ENCODE measurements at regions of chr10 and their contacts with region 1.

Region 1: DNA sequence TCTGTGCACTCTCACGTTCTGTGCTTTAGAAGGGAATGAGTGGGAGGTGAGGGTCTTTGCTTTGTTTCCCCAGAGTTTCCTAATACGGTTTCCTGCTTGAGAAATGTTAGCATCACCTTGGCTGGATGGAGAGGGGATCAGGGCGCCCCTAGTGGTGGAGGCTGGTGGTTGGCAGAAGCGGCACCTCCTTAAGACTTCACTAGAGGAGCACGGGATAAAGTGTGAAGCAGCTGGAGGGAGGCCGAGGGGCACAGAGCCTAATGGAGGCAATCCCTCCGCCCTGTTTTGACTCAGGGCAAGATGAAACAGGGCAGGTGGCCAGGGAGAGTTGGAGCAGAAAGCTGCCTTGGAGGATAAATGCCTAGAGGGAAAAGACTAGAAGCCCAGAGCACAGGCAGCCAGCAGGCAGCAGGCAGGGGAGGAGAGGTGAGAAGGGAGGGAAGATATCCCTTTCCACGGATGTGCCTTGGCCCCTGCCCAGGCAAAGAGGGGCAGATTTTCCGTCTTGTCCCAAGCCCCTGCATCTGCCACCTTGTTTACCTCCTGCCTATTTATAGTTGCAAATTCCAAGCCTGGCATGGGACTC is 56.0 kb upstream of the BTRC start:
- DNase-seq: peak; percentile 63 to 73 (median 68)
- H3K4me3 ChIP-seq: no peak overlapping the region
- H3K27ac ChIP-seq: no peak overlapping the region
- H3K4me1 ChIP-seq: no peaks in the 10 kb centered on the region
- H3K27me3 ChIP-seq: peaks cover 8 to 78% (median 24%) of the 10 kb centered on the region in 5 experiments

Region 2: GRCh38 chr10:101176577-101176976 is 121.4 kb before region 1 on chr10:
- CTCF ChIA-PET with region 1: no interaction called
- POLR2A ChIA-PET with region 1: no interaction called
- DNase-seq: no peak
- H3K4me3 ChIP-seq: no peak overlapping the region
- H3K27ac ChIP-seq: no peak overlapping the region
- H3K4me1 ChIP-seq: no peaks in the 10 kb centered on the region
- H3K27me3 ChIP-seq: peaks cover 2 to 27% (median 6%) of the 10 kb centered on the region in 5 experiments

Region 3: GRCh38 chr10:101257084-101257483 is 40.9 kb before region 1 on chr10:
- CTCF ChIA-PET with region 1: no interaction called
- POLR2A ChIA-PET with region 1: no interaction called
- DNase-seq: no peak
- H3K4me3 ChIP-seq: no peak overlapping the region
- H3K27ac ChIP-seq: no peak overlapping the region
- H3K4me1 ChIP-seq: no peaks in the 10 kb centered on the region
- H3K27me3 ChIP-seq: peaks cover 9 to 52% (median 21%) of the 10 kb centered on the region in 5 experiments

Region 4: DNA sequence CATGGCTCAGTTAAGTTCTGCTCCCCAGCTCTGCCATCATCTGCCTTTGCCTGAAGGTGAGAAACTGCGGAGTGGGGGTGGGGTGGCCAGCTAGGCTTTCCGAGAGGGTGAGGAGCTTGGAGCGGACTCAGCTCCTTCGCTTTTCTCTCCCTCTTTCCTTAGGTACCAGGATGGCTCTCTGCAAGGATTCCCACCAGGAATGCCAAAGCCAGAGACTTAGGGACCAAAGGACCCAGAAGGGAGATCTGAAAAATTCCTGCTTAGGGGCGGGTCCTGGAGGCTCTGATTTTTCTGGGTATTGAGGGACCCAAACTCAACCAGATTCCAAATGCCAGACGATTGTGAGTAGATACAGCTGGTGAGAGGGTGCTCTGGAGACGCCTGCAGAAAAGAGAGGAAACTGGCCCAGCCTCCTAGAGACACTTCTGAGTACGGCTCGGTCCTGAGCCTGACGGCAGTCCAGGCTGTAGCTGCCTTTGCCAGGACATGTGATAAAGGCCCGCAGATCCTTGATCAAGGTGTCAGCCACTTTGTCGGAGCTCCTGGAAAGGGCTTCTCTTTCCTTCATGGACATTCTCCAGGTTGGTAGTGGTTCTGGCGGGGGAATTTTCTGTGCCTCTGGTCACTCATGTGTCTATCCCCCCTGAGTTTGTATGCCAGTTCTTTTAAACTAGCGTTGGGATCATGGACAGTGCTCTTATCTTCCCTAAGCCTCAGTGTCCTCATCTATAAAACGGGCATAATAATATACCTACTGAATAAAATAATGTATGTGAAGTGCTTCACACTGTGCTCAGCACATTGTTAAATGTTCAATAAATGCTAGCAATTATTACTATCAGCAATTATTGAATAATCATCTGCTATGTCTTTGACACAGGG is 13.4 kb after region 1 on chr10:
- CTCF ChIA-PET with region 1: interaction called, 23 read pairs
- POLR2A ChIA-PET with region 1: no interaction called
- DNase-seq: no peak
- H3K4me3 ChIP-seq: peak overlapping the region in 1 of 7 experiments; percentile 12
- H3K27ac ChIP-seq: no peak overlapping the region
- H3K4me1 ChIP-seq: peaks cover 0 to 8% (median 2%) of the 10 kb centered on the region in 4 experiments
- H3K27me3 ChIP-seq: peaks cover 10 to 72% (median 20%) of the 10 kb centered on the region in 5 experiments

Region 5: GRCh38 chr10:101441541-101442455 is 143.8 kb after region 1 on chr10:
- CTCF ChIA-PET with region 1: interaction called, 55 read pairs
- POLR2A ChIA-PET with region 1: interaction called, 5 read pairs
- DNase-seq: peak; percentile 71 to 85 (median 81)
- H3K4me3 ChIP-seq: no peak overlapping the region
- H3K27ac ChIP-seq: no peak overlapping the region
- H3K4me1 ChIP-seq: no peaks in the 10 kb centered on the region
- H3K27me3 ChIP-seq: peaks cover 0 to 7% (median 0%) of the 10 kb centered on the region in 5 experiments

Region 6: DNA sequence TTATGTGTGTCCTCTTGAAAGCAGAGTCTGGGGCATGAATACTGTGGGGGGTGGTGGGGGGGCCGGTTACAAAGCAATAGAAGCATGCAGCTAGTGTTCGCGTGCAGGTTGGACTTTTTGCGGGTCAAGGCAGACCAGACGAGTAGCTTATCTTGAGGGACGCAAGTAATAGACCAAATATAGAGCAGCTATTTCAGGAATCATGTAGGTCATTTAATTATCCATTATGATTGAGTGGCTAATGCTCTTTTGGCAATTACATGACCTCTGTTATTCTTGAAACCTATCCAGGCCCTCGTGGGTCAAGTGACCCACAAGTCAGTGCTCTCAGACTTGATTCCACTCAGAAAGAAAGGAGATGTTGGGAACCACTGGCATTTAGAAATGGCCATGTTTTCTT is 149.0 kb after region 1 on chr10:
- CTCF ChIA-PET with region 1: interaction called, 55 read pairs
- POLR2A ChIA-PET with region 1: interaction called, 5 read pairs
- DNase-seq: no peak
- H3K4me3 ChIP-seq: no peak overlapping the region
- H3K27ac ChIP-seq: no peak overlapping the region
- H3K4me1 ChIP-seq: peaks cover 3 to 16% (median 11%) of the 10 kb centered on the region in 4 experiments
- H3K27me3 ChIP-seq: peaks cover 0 to 48% (median 8%) of the 10 kb centered on the region in 5 experiments

Region 7: DNA sequence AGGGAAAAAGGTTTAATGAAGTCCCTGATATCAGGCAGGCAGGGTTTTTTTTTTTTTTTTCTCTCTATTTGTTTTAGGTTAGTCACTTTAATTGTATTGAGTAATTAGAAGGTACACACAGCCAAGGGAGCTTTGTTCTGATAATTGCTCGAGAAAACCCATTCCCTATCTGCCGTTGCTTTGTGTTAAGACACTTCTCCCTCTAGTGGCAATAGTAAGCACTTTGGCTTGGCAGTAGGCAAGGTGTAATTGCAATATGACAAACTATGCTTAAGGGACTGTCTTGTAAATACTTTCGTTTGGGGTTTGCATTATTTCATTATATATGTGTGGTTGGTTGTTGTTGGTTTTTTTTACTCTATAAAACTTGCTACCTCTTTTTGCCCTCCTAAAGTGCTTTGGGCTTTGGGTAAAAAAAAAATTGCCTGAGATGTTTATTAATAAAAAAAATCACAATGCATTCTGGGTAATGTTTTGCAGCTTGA is 169.3 kb after region 1 on chr10:
- CTCF ChIA-PET with region 1: interaction called, 25 read pairs
- POLR2A ChIA-PET with region 1: no interaction called
- DNase-seq: peak; percentile 78 to 89 (median 87)
- H3K4me3 ChIP-seq: peak overlapping the region in 1 of 7 experiments; percentile 24
- H3K27ac ChIP-seq: no peak overlapping the region
- H3K4me1 ChIP-seq: no peaks in the 10 kb centered on the region
- H3K27me3 ChIP-seq: peaks cover 0 to 3% (median 0%) of the 10 kb centered on the region in 5 experiments